ENCODE measurements at regions of chr18 and their contacts with region 1.

Region 1: DNA sequence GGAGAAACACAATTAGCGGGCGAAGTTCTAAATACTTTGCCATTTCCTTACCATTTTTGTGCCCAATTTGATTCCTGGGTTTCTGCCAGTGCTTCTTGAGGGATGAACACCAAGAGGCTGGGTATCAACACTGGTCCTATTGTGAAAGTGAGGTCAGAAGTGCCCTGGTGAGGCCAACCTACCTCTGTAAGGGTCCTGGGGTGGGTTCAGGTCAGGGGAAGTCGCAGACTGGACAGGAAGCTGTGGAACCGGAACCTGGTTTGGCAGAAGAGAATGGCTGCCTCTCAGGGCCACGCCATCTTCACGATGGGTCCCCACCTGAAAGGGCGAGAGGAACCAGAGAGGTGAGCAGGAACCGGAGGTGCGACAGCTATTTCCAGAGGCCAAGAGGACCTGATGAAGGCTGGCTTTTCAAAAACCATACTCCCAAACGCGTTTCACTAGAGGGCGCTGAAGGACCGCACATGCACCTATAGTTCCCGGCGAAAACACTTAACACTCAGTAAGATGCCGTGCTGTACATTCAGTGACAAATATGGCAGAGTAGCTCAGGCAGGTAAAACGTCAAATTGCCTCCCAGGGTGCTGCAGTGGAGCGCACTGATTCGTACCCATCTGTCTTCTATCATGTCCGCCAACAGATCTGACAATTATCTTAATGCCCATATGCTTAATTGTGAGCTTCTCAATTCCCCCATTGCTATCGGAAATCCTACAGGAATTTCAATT is 275.3 kb upstream of the CCDC68 start:
- DNase-seq: peak; percentile 88
- H3K4me3 ChIP-seq: no peak overlapping the region
- H3K27ac ChIP-seq: no peak overlapping the region
- H3K4me1 ChIP-seq: 0 out of 2 replicates have a peak, but pooled peaks cover 4% of the 10 kb centered on the region
- H3K27me3 ChIP-seq: no peaks in the 10 kb centered on the region

Region 2: GRCh38 chr18:54616220-54616848 is 618.2 kb before region 1 on chr18:
- in situ Hi-C with region 1: no loop called
- DNase-seq: no peak
- H3K4me3 ChIP-seq: no peak overlapping the region
- H3K27ac ChIP-seq: no peak overlapping the region
- H3K4me1 ChIP-seq: no peaks in the 10 kb centered on the region
- H3K27me3 ChIP-seq: no peaks in the 10 kb centered on the region

Region 3: DNA sequence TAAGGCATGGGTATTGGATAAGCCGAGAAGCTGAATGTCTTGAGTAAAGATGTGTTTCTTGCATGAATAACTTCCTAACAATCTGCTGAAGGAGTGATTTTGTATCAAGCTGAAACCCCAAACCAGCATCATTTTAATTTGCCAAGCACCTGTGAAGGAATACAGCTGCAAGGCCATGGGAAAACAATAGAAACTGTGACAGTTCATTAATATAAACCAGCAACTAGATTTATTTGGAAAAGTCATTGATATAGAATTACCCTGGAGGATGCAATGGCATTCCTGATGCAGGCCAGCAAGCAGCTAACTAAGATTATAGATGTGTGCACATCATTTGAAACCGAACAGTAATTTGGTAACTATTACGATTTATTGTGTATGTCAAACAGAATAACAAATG is 509.2 kb after region 1 on chr18:
- in situ Hi-C with region 1: no loop called
- DNase-seq: no peak
- H3K4me3 ChIP-seq: no peak overlapping the region
- H3K27ac ChIP-seq: no peak overlapping the region
- H3K4me1 ChIP-seq: no peaks in the 10 kb centered on the region
- H3K27me3 ChIP-seq: no peaks in the 10 kb centered on the region

Region 4: GRCh38 chr18:55781481-55781957 is 547.0 kb after region 1 on chr18:
- in situ Hi-C with region 1: loop called (anchors 25 kb)
- DNase-seq: peak; percentile 76
- H3K4me3 ChIP-seq: no peak overlapping the region
- H3K27ac ChIP-seq: no peak overlapping the region
- H3K4me1 ChIP-seq: no peaks in the 10 kb centered on the region
- H3K27me3 ChIP-seq: no peaks in the 10 kb centered on the region

Region 5: GRCh38 chr18:56575819-56576663 is 1341.5 kb after region 1 on chr18:
- in situ Hi-C with region 1: loop called (anchors 10 kb)
- DNase-seq: peak; percentile 77
- H3K4me3 ChIP-seq: no peak overlapping the region
- H3K27ac ChIP-seq: no peak overlapping the region
- H3K4me1 ChIP-seq: no peaks in the 10 kb centered on the region
- H3K27me3 ChIP-seq: no peaks in the 10 kb centered on the region

Measured in GM23248 (cell line).